AG04449 (cell line): ENCODE measurements at regions of chr1 and their contacts with region 1.

Region 1: GRCh38 chr1:160226623-160227022 is 21.4 kb downstream of the PEA15 start:
- DNase-seq: no peak
- H3K4me3 ChIP-seq: no peak overlapping the region
- CTCF ChIP-seq: no peak

Region 2: DNA sequence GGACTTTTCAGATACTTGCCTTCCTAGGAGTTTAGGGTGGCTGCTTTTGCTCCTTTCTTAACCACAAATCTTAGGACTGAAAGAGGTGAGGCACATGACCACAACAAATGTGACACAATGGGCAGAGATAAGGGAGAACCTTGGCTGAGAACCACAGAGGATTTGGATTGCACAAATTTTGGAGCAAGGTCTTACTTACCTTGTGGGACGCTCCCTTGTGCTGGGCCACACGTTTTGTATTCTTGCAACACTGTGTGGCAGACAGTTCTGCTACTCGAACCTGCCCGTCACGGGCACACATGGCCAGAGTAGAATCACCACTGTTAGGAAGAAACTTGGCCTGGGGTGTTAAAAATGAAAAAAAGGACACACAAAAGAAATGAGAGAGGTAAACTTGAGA is 11.8 kb after region 1 on chr1:
- CTCF ChIA-PET with region 1: interaction called, 12 read pairs
- POLR2A ChIA-PET with region 1: interaction called, 3 read pairs
- DNase-seq: no peak
- H3K4me3 ChIP-seq: no peak overlapping the region
- CTCF ChIP-seq: no peak

Region 3: GRCh38 chr1:160494620-160495019 is 268.0 kb after region 1 on chr1:
- CTCF ChIA-PET with region 1: no interaction called
- POLR2A ChIA-PET with region 1: no interaction called
- DNase-seq: no peak
- H3K4me3 ChIP-seq: no peak overlapping the region
- CTCF ChIP-seq: peak; percentile 21